ENCODE measurements at regions of chr6 and their contacts with region 1.

Region 1: GRCh38 chr6:79869600-79870084 is 77.7 kb downstream of the ELOVL4 start:
- DNase-seq: peak; percentile 87
- H3K4me3 Mint-ChIP-seq: peak overlapping the region; percentile 41
- H3K27ac Mint-ChIP-seq: no peak overlapping the region
- H3K4me1 Mint-ChIP-seq: peaks cover 7% of the 10 kb centered on the region
- H3K27me3 Mint-ChIP-seq: peaks cover 4% of the 10 kb centered on the region

Region 2: DNA sequence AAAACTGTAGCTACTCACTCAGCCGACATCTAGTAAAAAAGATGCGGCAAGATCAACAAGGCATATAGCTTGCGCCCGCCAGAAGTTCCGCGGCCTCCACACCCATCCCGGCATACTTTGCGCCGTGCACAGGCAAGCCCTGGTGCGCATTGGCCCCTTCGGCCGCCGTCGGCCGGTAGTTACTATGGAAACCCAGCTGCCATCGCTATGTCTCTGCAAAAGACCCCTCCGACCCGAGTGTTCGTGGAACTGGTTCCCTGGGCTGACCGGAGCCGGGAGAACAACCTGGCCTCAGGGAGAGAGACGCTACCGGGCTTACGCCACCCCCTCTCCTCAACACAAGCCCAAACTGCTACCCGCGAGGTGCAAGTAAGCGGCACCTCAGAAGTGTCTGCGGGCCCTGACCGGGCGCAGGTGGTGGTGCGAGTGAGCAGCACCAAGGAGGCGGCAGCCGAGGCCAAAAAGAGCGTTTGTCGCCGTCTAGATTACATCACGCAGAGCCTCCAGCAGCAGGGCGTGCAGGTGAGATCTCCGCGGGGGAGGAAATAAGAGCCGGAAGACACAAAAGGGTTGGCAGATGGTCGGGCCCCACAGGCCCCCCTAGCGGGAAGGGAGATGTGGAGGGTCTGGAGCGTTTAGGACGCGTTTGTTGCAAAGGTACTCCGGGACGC is 1002.1 kb before region 1 on chr6 and contains the start of gene IRAK1BP1:
- CTCF ChIA-PET with region 1: no interaction called
- intact Hi-C with region 1: loop called (anchors 10 kb)
- DNase-seq: peak; percentile 90
- H3K4me3 Mint-ChIP-seq: peak within 1 kb of the TSS; percentile 98
- H3K27ac Mint-ChIP-seq: peak within 1 kb of the TSS; percentile 85
- H3K4me1 Mint-ChIP-seq: peaks cover 19% of the 10 kb centered on the region
- H3K27me3 Mint-ChIP-seq: no peaks in the 10 kb centered on the region
- total RNA-seq, gene IRAK1BP1: 2.2 to 2.4 TPM

Region 3: GRCh38 chr6:79404681-79405156 is 464.9 kb before region 1 on chr6:
- CTCF ChIA-PET with region 1: no interaction called
- intact Hi-C with region 1: no loop called
- DNase-seq: no peak
- H3K4me3 Mint-ChIP-seq: no peak overlapping the region
- H3K27ac Mint-ChIP-seq: no peak overlapping the region
- H3K4me1 Mint-ChIP-seq: no peaks in the 10 kb centered on the region
- H3K27me3 Mint-ChIP-seq: peaks cover 2% of the 10 kb centered on the region

Region 4: DNA sequence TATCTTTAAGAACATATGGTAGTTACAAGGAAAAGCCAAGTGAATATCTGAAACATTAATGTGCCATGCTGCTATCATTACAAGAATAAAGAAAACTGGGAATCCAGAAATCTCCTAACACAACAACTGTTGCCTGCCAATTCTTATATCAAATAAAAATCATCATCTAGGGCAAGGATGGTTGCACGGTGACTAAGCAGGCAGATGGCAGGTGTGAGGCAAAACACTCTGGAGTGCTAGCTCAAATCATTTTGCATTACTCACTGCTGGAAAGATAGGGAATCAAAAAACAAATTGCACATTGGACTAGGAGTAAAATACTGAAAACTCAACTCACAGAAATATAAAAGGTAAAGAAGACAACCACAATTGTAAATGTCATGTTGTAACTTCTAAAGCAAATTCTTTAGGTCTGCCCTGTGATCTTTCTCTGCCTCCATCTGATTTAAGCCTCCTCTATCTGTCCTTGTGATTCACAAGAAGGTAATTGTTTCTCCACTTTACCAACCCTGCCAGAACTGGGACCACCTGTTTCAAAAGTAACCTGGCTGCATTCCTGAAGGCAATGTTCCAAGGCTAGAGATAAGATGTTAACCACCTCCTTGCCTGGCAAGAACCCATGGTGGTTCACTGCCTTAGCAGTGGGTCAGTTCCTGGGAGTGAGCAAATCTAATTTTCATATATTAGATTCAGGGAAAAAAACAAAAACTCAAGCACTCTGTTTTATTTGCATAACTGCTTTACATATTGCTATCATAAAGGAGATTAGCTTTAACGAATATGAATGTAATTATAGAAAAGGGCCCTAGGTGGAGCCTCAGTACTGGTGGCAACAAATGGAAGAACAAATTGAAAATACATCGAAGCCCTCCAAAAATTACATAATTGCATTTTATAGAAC is 299.3 kb before region 1 on chr6:
- CTCF ChIA-PET with region 1: interaction called, 4 read pairs
- intact Hi-C with region 1: loop called (anchors 1 kb)
- DNase-seq: no peak
- H3K4me3 Mint-ChIP-seq: no peak overlapping the region
- H3K27ac Mint-ChIP-seq: no peak overlapping the region
- H3K4me1 Mint-ChIP-seq: no peaks in the 10 kb centered on the region
- H3K27me3 Mint-ChIP-seq: no peaks in the 10 kb centered on the region

Region 5: DNA sequence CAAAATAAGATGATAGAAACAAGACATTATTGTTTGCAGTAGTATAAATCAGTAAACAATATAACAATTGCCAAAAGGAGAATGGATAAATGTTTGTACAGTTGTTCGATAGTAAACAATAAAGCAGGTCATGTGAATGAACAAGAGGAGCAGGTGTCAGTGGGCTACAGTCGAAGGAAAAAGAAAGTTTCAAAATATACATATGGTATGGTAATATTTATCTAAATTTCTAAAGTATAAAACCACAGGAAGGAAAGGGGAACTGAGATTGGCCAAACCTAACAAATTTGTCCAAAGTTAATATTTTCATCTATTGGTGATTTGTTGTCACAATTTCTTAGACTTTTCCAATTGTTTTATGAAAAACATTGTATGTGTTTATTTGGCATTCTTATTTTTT is 127.6 kb before region 1 on chr6:
- CTCF ChIA-PET with region 1: no interaction called
- intact Hi-C with region 1: no loop called
- DNase-seq: no peak
- H3K4me3 Mint-ChIP-seq: no peak overlapping the region
- H3K27ac Mint-ChIP-seq: no peak overlapping the region
- H3K4me1 Mint-ChIP-seq: no peaks in the 10 kb centered on the region
- H3K27me3 Mint-ChIP-seq: no peaks in the 10 kb centered on the region

Region 6: GRCh38 chr6:79777713-79778579 is 91.7 kb before region 1 on chr6:
- CTCF ChIA-PET with region 1: interaction called, 14 read pairs
- intact Hi-C with region 1: loop called (anchors 1 kb)
- DNase-seq: peak; percentile 92
- H3K4me3 Mint-ChIP-seq: peak overlapping the region; percentile 64
- H3K27ac Mint-ChIP-seq: peak overlapping the region; percentile 50
- H3K4me1 Mint-ChIP-seq: peaks cover 6% of the 10 kb centered on the region
- H3K27me3 Mint-ChIP-seq: no peaks in the 10 kb centered on the region

Region 7: GRCh38 chr6:79949233-79949632 is 79.6 kb after region 1 on chr6:
- CTCF ChIA-PET with region 1: interaction called, 10 read pairs
- intact Hi-C with region 1: loop called (anchors 1 kb)
- DNase-seq: peak; percentile 83
- H3K4me3 Mint-ChIP-seq: no peak overlapping the region
- H3K27ac Mint-ChIP-seq: no peak overlapping the region
- H3K4me1 Mint-ChIP-seq: peaks cover 14% of the 10 kb centered on the region
- H3K27me3 Mint-ChIP-seq: peaks cover 34% of the 10 kb centered on the region

Region 8: GRCh38 chr6:80094017-80094416 is 224.4 kb after region 1 on chr6:
- CTCF ChIA-PET with region 1: no interaction called
- intact Hi-C with region 1: loop called (anchors 1 kb)
- DNase-seq: peak; percentile 14
- H3K4me3 Mint-ChIP-seq: no peak overlapping the region
- H3K27ac Mint-ChIP-seq: no peak overlapping the region
- H3K4me1 Mint-ChIP-seq: no peaks in the 10 kb centered on the region
- H3K27me3 Mint-ChIP-seq: no peaks in the 10 kb centered on the region

Region 9: GRCh38 chr6:80480421-80481157 is 610.9 kb after region 1 on chr6:
- CTCF ChIA-PET with region 1: no interaction called
- intact Hi-C with region 1: no loop called
- DNase-seq: no peak
- H3K4me3 Mint-ChIP-seq: no peak overlapping the region
- H3K27ac Mint-ChIP-seq: no peak overlapping the region
- H3K4me1 Mint-ChIP-seq: no peaks in the 10 kb centered on the region
- H3K27me3 Mint-ChIP-seq: peaks cover 10% of the 10 kb centered on the region

Measured in activated naive CD4-positive, alpha-beta T cell treated with anti-CD3 and anti-CD28 coated beads for 36 hours (primary cell).